Activated CD4-positive, alpha-beta T cell treated with anti-CD3 and anti-CD28 coated beads, Interleukin-2, amount 10 ng/mL, durations not matched to agents 7 days and 5 days (primary cell): ENCODE measurements at regions of chr4 and their contacts with region 1.

Region 1: GRCh38 chr4:142353149-142353738 is 492.9 kb downstream of the INPP4B start:
- DNase-seq: no peak
- H3K4me3 Mint-ChIP-seq: peak overlapping the region; percentile 47
- H3K27ac Mint-ChIP-seq: peak overlapping the region; percentile 82
- H3K4me1 Mint-ChIP-seq: peaks cover 95% of the 10 kb centered on the region
- H3K27me3 Mint-ChIP-seq: no peaks in the 10 kb centered on the region

Region 2: DNA sequence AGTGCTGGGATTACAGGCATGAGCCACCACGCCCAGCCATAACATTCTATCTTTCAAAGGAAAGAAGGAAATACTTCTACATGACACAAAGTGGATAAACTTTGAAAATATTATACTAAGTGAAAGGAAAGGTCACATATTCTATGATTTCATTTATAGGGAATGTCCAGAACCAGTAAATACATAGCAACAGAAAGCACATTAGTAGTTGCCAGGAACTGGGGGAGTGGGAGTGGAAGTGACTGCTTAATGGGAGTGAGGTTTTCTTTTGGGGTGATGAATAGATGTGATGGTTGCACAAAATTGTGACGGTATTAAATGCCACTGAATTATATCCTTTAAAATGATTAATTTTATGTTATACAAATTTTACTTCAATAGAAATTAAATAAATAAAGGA is 812.6 kb before region 1 on chr4:
- CTCF ChIA-PET with region 1: no interaction called
- POLR2A ChIA-PET with region 1: no interaction called
- DNase-seq: no peak
- H3K4me3 Mint-ChIP-seq: no peak overlapping the region
- H3K27ac Mint-ChIP-seq: no peak overlapping the region
- H3K4me1 Mint-ChIP-seq: no peaks in the 10 kb centered on the region
- H3K27me3 Mint-ChIP-seq: no peaks in the 10 kb centered on the region

Region 3: DNA sequence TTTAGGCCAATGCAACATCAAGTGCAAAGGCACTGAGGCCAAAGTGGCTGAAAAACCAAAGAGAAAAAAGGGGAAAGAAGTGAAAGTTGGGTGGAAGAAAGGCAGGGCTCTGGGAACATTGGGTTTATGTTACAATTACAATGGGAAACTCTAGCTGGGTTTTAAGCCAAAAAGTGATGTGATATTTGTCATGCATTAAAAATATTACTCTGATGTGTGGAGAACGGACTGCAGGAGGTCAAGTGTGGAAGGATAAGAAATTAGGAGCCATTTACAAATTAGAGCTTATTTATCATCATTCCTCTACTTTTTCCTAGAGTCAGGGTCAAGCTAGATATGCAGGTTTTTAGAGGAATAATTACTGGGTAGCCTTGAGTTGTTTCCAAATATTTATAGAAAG is 23.9 kb before region 1 on chr4:
- CTCF ChIA-PET with region 1: no interaction called
- POLR2A ChIA-PET with region 1: no interaction called
- DNase-seq: no peak
- H3K4me3 Mint-ChIP-seq: no peak overlapping the region
- H3K27ac Mint-ChIP-seq: no peak overlapping the region
- H3K4me1 Mint-ChIP-seq: peaks cover 45% of the 10 kb centered on the region
- H3K27me3 Mint-ChIP-seq: no peaks in the 10 kb centered on the region

Region 4: GRCh38 chr4:142341268-142341667 is 12.0 kb before region 1 on chr4:
- CTCF ChIA-PET with region 1: interaction called, 25 read pairs
- POLR2A ChIA-PET with region 1: interaction called, 3 read pairs
- DNase-seq: no peak
- H3K4me3 Mint-ChIP-seq: no peak overlapping the region
- H3K27ac Mint-ChIP-seq: no peak overlapping the region
- H3K4me1 Mint-ChIP-seq: peaks cover 20% of the 10 kb centered on the region
- H3K27me3 Mint-ChIP-seq: no peaks in the 10 kb centered on the region

Region 5: DNA sequence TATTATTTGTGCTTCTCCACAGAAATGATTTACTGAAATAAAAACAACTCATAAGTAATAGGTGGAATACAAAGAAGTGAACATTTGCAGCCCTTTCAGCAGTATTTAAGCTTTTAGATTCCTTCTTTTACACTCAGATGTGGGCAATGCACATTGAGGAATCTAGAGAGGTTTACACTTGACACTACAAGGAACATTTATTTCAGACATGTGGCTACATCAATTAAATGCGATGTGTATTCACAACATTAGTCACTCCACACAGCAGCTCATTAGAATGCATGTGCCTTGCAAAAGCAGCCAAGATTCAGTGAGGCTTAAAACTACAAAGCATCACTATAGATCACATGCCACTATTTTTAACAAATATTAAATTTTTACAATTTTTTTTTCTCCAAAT is 12.1 kb after region 1 on chr4:
- CTCF ChIA-PET with region 1: interaction called, 13 read pairs
- POLR2A ChIA-PET with region 1: no interaction called
- DNase-seq: no peak
- H3K4me3 Mint-ChIP-seq: no peak overlapping the region
- H3K27ac Mint-ChIP-seq: no peak overlapping the region
- H3K4me1 Mint-ChIP-seq: peaks cover 51% of the 10 kb centered on the region
- H3K27me3 Mint-ChIP-seq: no peaks in the 10 kb centered on the region

Region 6: DNA sequence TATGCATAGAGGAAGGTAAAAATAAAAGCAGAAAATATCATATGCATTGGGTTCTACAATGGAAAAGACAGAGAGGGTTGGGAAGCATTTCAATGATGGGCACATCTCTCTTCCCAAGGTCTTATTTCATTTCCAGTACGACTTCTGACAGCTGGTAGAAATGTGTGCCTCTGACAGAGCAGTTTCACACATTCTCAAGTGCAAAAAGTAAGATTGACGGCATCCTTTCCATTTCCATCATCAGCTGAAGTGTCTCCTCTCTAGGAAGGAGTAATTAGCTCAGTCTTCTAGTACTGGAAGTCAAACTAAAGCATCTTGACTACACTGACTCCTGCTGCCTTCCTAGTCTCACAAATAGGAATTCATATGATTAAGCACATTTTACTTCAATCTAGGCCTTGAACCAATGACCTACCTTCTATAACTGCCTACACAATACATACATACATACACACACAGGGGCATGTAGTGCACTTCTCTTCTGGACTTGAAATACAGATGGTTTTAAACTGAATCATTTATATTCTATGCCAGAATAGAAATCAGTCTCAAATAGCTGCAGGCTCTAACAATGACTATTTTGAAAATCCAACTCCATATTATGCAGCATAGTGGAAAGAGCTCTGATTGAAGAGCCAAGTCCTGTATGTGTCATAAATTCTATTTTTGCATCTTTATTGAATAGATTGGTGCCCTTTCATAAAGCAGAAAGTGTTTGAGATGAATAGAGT is 19.5 kb after region 1 on chr4:
- CTCF ChIA-PET with region 1: interaction called, 18 read pairs
- POLR2A ChIA-PET with region 1: interaction called, 3 read pairs
- DNase-seq: no peak
- H3K4me3 Mint-ChIP-seq: no peak overlapping the region
- H3K27ac Mint-ChIP-seq: no peak overlapping the region
- H3K4me1 Mint-ChIP-seq: peaks cover 67% of the 10 kb centered on the region
- H3K27me3 Mint-ChIP-seq: no peaks in the 10 kb centered on the region